BJ (cell line): ENCODE measurements at regions of chr3 and their contacts with region 1.

Region 1: GRCh38 chr3:160413613-160414248 is 14.3 kb downstream of the SMC4 start:
- DNase-seq: no peak
- H3K4me3 ChIP-seq: no peak overlapping the region
- H3K27me3 ChIP-seq: no peaks in the 10 kb centered on the region
- CTCF ChIP-seq: peak; percentile 82

Region 2: DNA sequence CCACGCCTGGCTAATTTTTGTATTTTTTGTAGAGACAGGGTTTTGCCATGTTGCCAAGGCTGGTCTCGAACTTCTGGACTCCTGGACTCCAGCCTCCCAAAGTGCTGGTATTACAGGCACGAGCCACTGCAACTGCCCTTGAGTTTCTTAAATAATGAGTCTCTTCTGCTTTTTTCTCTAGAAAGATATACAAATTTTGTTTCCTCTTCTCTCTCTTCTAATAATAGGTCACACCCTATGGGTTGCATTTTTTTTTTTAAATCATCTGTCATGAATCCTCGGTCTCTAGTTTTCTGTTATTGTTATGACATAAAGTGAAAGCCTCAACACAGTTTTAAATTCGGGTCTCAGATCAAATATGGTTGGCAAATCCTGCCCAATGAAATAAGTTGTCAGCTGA is 313.9 kb before region 1 on chr3:
- CTCF ChIA-PET with region 1: no interaction called
- POLR2A ChIA-PET with region 1: no interaction called
- DNase-seq: no peak
- H3K4me3 ChIP-seq: no peak overlapping the region
- H3K27me3 ChIP-seq: peaks cover 4% of the 10 kb centered on the region; the same call in 1 of the 2 replicates
- CTCF ChIP-seq: no peak

Region 3: DNA sequence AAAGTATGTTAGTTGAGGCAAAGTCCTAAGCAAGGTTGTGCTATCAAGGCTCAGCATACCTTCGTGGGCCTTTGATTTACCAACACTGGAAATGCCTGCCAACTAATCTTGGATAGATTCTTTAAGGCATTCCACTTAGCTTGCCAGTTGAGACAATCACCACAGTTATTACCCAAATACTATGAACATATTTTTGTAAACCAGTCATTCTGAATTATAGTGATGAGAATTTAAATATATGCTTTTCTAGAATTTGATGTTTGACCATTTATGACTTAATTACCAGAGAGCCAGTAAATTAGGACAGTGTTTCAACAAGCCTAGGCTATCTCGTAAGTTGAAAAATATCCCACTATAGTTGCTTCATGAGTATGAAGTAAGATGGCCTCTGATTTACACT is 20.3 kb after region 1 on chr3:
- CTCF ChIA-PET with region 1: interaction called, 11 read pairs
- POLR2A ChIA-PET with region 1: no interaction called
- DNase-seq: no peak
- H3K4me3 ChIP-seq: no peak overlapping the region
- H3K27me3 ChIP-seq: no peaks in the 10 kb centered on the region
- CTCF ChIP-seq: no peak

Region 4: DNA sequence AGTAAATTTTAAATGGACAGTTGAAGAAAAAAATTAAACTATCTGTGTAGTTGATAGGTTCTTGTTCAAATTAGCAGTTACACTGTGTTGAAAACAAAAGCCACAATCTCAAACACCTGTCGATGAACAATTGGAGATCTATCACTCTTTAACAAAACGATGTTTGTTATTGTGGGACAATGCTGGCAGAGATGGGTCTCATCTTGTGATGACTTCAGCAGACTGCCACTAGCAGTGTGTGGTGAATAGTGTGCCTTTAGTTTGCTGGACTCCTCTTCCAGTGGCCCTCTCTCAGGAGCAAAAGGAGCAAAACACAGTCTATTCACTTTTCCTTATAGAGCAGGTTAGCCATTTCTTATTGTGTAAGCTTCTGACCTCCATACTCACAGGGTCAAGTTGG is 50.6 kb after region 1 on chr3:
- CTCF ChIA-PET with region 1: no interaction called
- POLR2A ChIA-PET with region 1: no interaction called
- DNase-seq: no peak
- H3K4me3 ChIP-seq: no peak overlapping the region
- H3K27me3 ChIP-seq: no peaks in the 10 kb centered on the region
- CTCF ChIP-seq: no peak